HCT116 (cell line): ENCODE measurements at regions of chr3 and their contacts with region 1.

Region 1: GRCh38 chr3:37974121-37975083 is 16.2 kb upstream of the VILL start:
- DNase-seq: peak; percentile 43
- ATAC-seq: peak; percentile 98
- H3K4me3 ChIP-seq: no peak overlapping the region
- H3K27ac ChIP-seq: no peak overlapping the region
- H3K4me1 ChIP-seq: no peaks in the 10 kb centered on the region
- H3K27me3 ChIP-seq: no peaks in the 10 kb centered on the region
- CTCF ChIP-seq: peak; percentile 85 to 94 (median 88)
- POLR2A ChIP-seq: no peak
- RAD21 ChIP-seq: peak; percentile 86

Region 2: DNA sequence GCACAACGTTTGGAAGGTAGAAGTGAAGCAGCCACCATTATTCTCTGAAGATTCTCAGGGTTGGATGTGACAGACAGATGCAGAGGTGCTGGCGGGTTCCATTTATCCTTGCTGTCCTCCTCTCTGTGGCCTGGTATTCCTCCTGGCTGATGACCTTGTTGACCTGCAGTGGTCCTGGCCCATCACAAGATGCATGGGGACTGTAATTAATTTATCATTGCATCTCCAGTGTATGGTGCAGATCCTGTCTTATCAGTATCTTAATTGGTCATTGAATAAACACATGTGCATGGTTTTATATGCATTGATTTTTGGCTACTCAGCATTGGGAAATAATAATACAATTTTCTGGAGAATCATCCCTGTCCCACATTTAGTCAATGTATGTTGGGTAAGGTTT is 540.6 kb before region 1 on chr3:
- CTCF ChIA-PET with region 1: no interaction called
- POLR2A ChIA-PET with region 1: no interaction called
- RAD21 ChIA-PET with region 1: no interaction called
- intact Hi-C with region 1: loop called (anchors 5 kb)
- DNase-seq: no peak
- ATAC-seq: no peak
- H3K4me3 ChIP-seq: no peak overlapping the region
- H3K27ac ChIP-seq: no peak overlapping the region
- H3K4me1 ChIP-seq: no peaks in the 10 kb centered on the region
- H3K27me3 ChIP-seq: no peaks in the 10 kb centered on the region
- CTCF ChIP-seq: no peak
- POLR2A ChIP-seq: no peak
- RAD21 ChIP-seq: no peak

Region 3: GRCh38 chr3:37645517-37646380 is 328.7 kb before region 1 on chr3:
- CTCF ChIA-PET with region 1: no interaction called
- POLR2A ChIA-PET with region 1: no interaction called
- RAD21 ChIA-PET with region 1: no interaction called
- intact Hi-C with region 1: no loop called
- DNase-seq: no peak
- ATAC-seq: no peak
- H3K4me3 ChIP-seq: no peak overlapping the region
- H3K27ac ChIP-seq: no peak overlapping the region
- H3K4me1 ChIP-seq: no peaks in the 10 kb centered on the region
- H3K27me3 ChIP-seq: no peaks in the 10 kb centered on the region
- CTCF ChIP-seq: no peak
- POLR2A ChIP-seq: no peak
- RAD21 ChIP-seq: no peak

Region 4: DNA sequence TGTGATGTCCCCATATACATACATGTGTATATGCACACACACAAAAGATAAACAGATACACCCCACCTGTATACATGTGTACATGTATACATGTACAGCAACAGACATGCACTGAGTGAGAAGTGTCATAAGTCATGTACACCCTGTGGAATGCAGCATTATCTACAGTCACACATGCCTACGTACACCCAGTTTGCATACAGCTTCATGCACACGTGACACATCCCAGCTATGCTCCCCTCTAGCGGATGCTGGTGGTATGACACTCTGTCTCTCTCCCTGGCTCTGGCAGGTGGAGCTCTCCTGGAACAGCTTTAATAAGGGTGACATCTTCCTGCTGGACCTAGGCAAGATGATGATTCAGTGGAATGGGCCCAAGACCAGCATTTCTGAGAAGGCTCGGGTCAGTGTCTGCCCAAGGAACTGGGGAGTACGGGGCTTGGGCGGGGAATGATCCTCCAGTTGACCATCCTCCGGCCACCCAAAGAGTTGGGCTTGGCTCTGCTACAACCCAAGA is 22.4 kb after region 1 on chr3:
- CTCF ChIA-PET with region 1: interaction called, 22 read pairs
- POLR2A ChIA-PET with region 1: interaction called, 3 read pairs
- RAD21 ChIA-PET with region 1: no interaction called
- intact Hi-C with region 1: loop called (anchors 1 kb)
- DNase-seq: peak; percentile 79
- ATAC-seq: peak; percentile 66
- H3K4me3 ChIP-seq: no peak overlapping the region
- H3K27ac ChIP-seq: no peak overlapping the region
- H3K4me1 ChIP-seq: peaks cover 11 to 46% of the 10 kb centered on the region in 2 experiments
- H3K27me3 ChIP-seq: no peaks in the 10 kb centered on the region
- CTCF ChIP-seq: peak in 2 of 3 experiments; percentile 90 to 97; a peak in 4 of 6 replicates
- POLR2A ChIP-seq: no peak
- RAD21 ChIP-seq: no peak

Region 5: GRCh38 chr3:38004415-38005076 is 30.1 kb after region 1 on chr3:
- CTCF ChIA-PET with region 1: interaction called, 8 read pairs
- POLR2A ChIA-PET with region 1: no interaction called
- RAD21 ChIA-PET with region 1: no interaction called
- intact Hi-C with region 1: loop called (anchors 1 kb)
- DNase-seq: peak; percentile 54
- ATAC-seq: peak; percentile 77
- H3K4me3 ChIP-seq: no peak overlapping the region
- H3K27ac ChIP-seq: no peak overlapping the region; the same call in 1 of the 2 replicates
- H3K4me1 ChIP-seq: peaks cover 0 to 24% of the 10 kb centered on the region in 2 experiments; a peak in 2 of 4 replicates
- H3K27me3 ChIP-seq: no peaks in the 10 kb centered on the region
- CTCF ChIP-seq: peak in 2 of 3 experiments; percentile 77 to 85; a peak in 4 of 6 replicates
- POLR2A ChIP-seq: no peak
- RAD21 ChIP-seq: no peak

Region 6: DNA sequence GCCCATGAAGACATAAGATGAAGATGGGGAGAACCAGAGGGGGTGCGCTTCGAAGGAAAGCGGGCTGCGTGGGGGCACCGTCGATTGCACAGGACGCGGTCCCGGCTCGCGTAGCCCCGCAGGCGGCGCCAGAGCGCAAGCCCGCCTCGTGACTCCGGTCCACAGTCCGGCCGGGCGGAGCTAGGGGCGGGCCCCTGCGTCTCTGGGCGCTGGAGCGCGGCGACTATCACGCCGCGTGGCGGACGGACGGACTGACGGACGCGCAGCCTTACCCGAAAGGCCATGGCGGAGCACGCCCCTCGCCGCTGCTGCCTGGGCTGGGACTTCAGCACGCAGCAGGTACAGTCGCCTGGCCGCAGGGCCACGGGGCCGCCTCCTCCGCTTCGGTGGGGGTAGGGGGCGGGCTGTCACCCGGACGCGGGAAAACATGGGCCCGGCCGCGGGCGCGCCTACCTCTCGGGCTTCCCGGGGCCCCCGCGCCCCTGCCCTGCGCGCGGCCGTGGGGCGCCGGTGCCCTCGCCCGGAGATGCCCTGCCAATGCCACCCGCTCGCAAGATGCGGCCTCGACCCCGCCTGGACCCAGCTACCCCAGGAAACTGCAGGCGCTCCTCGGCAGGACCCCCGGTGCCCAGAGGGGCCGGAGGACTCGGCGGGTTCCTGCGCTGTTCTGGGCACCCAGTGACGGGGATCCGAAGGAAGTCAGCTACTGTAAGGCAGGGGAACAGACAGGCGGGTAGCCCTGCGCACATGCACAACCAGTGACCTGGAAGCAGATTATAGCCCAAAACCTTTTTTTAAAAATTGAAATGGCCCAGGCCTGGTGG is 372.4 kb after region 1 on chr3 and contains the start of gene XYLB:
- CTCF ChIA-PET with region 1: interaction called, 3 read pairs
- POLR2A ChIA-PET with region 1: no interaction called
- RAD21 ChIA-PET with region 1: no interaction called
- intact Hi-C with region 1: loop called (anchors 10 kb)
- DNase-seq: peak; percentile 63
- ATAC-seq: peak; percentile 94
- H3K4me3 ChIP-seq: peak within 1 kb of the TSS; percentile 77 to 87
- H3K27ac ChIP-seq: peak within 1 kb of the TSS; percentile 64
- H3K4me1 ChIP-seq: peaks cover 0 to 34% of the 10 kb centered on the region in 2 experiments; a peak in 2 of 4 replicates
- H3K27me3 ChIP-seq: no peaks in the 10 kb centered on the region
- CTCF ChIP-seq: peak; percentile 68 to 81 (median 76)
- POLR2A ChIP-seq: peak; percentile 29
- RAD21 ChIP-seq: peak; percentile 74
- total RNA-seq, gene XYLB: 14.0 TPM